Activated T-helper 2 cell treated with anti-CD3 and anti-CD28 coated beads, Interferon-gamma antibody, Interleukin-2, Interleukin-4, amounts not matched to agents 10 μg/mL and 5 μg/mL and 100 μg/mL, durations not matched to agents 14 hours and 24 hours and 36 hours (primary cell): ENCODE measurements at regions of chr3 and their contacts with region 1.

Region 1: GRCh38 chr3:142028243-142028777 is 121.0 kb downstream of the TFDP2 start:
- DNase-seq: peak; percentile 26
- H3K4me3 Mint-ChIP-seq: peak overlapping the region; percentile 90
- H3K27ac Mint-ChIP-seq: peak overlapping the region; percentile 86
- H3K4me1 Mint-ChIP-seq: peaks cover 31% of the 10 kb centered on the region
- H3K27me3 Mint-ChIP-seq: no peaks in the 10 kb centered on the region

Region 2: DNA sequence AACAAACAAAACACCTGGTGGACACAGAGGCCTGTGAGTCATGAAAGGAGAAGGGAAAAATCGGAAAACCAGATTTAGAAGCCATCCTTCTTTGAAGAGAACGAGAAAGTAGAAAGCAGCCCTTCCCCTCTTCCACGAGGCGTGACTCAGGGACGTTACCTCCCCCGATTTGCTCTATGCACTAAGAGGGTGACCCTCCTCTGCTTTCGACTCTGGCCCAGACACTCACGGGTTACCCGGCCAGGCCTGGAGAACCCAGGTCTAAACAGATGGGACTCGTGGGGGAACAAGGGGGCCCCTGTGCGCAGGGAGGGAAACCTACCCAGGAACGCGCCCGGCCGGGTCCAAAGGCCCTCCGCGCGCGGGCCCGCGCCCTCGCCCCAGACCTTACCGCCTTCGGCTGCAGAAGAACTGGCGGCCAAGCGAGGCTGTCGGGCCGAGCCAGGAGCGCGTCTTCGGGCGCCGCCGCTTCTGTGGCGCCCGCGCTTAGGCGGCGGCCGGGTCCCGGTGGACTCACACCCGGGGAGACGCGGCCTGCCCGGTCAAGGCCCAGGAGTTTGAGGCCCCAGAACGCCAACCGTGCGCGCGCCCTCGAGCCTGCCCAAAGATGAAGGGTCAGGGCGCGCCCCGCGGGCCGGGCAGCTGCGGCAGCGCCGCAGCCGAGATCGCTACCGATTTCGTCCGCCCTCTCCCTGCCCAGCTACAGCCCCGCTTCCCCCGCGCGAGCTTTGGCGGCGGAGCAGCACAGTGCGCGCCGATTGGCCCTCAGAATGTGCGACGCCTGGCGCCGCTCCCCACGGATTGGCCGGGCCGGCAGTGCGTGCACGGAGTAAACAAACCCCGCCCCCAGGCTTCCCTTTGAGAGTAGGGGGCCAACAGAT is 120.7 kb after region 1 on chr3 and contains the start of gene TFDP2:
- intact Hi-C with region 1: loop called (anchors 2 kb)
- DNase-seq: peak; percentile 86
- H3K4me3 Mint-ChIP-seq: peak within 1 kb of the TSS; percentile 84
- H3K27ac Mint-ChIP-seq: peak within 1 kb of the TSS; percentile 64
- H3K4me1 Mint-ChIP-seq: peaks cover 30% of the 10 kb centered on the region
- H3K27me3 Mint-ChIP-seq: peaks cover 3% of the 10 kb centered on the region
- total RNA-seq, gene TFDP2: 36.7 and 37.2 TPM in 2 replicates